ENCODE measurements at regions of chr1 and their contacts with region 1.

Region 1: GRCh38 chr1:72341661-72342060 is 59.3 kb upstream of the NEGR1 start:
- DNase-seq: no peak
- H3K4me3 ChIP-seq: no peak overlapping the region
- H3K27ac ChIP-seq: no peak overlapping the region
- H3K4me1 ChIP-seq: no peaks in the 10 kb centered on the region
- H3K27me3 ChIP-seq: no peaks in the 10 kb centered on the region
- CTCF ChIP-seq: no peak
- POLR2A ChIP-seq: no peak

Region 2: DNA sequence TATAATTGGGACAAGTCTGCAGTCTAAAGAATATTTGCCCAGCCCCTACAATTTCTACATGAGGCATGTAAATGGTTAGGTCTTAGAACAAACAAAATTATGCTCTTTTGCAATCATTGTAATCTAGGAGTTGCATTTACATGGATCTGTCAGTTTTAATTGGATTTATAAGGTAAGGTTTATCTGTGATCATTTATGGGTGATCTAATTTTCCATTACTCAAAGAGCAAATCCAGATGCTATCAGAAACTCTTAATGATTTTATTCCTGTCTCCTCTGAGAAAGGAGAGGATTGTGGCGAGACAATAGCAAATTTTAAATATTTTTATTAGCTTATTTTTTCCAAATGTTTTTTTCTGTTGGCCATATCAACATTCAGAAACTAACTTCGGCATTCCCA is 45.2 kb before region 1 on chr1:
- intact Hi-C with region 1: loop called (anchors 1 kb)
- DNase-seq: no peak
- H3K4me3 ChIP-seq: no peak overlapping the region
- H3K27ac ChIP-seq: no peak overlapping the region
- H3K4me1 ChIP-seq: no peaks in the 10 kb centered on the region
- H3K27me3 ChIP-seq: no peaks in the 10 kb centered on the region
- CTCF ChIP-seq: no peak
- POLR2A ChIP-seq: no peak